ENCODE measurements at regions of chr5 and their contacts with region 1.

Region 1: DNA sequence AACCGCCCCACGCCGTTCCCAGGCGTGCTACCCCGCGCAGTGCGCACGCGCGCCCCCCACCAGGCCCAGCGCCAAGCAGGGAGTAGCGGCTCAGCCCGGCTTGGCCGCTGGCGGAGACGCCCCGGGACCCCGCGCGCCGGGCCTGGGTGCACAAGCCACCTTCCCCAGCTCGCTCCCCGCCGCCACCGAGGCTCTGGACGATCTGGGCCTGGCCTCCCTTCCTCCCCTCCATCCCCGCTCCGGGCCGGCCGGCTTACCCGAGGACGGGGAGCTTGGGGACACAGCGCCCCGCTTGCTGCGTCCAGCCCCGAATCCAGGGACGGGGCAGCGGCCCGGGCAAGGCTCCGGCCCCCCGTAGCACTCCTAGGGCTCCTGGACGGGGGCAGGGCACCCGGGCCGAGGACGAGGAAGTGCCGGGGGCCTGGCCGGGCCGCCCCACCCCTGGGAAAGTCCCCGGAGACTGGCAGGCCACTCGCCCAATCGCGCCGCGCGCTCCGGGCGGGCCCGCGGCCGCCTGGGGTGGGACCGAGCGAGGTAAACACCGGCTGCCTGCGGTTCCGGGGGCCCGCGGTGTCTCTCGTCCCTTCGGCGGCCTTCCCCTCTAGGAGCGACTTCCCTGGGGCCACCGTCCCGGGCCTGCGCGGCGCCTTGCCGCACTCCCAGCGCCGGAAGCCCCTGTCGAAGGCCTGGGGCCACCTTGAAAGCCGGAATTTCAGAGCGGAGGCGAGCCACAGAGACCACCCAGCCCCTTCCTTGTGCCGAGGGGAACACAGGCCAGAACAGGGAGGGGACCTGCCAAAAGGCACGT is at the start of gene TNIP1:
- DNase-seq: peak; percentile 96 to 98 (median 97)
- ATAC-seq: peak; percentile 87 to 98 (median 95)
- H3K4me3 ChIP-seq: peak within 1 kb of the TSS; percentile 63 to 100 (median 85)
- H3K27ac ChIP-seq: peak within 1 kb of the TSS; percentile 92 to 100 (median 96)
- H3K4me1 ChIP-seq: peaks cover 18 to 84% (median 62%) of the 10 kb centered on the region in 12 donors
- H3K27me3 ChIP-seq: no peaks in the 10 kb centered on the region
- CTCF ChIP-seq: peak in 1 of 12 donors; percentile 22
- POLR2A ChIP-seq: peak in 1 of 2 donors; percentile 78
- total RNA-seq, gene TNIP1: 86.0 to 180 (median 122) TPM

Region 2: GRCh38 chr5:151020304-151021110 is 60.3 kb before region 1 on chr5 and contains the start of gene GPX3:
- intact Hi-C with region 1: no loop called
- DNase-seq: peak; percentile 95 to 97 (median 97)
- ATAC-seq: peak; percentile 81 to 92 (median 85)
- H3K4me3 ChIP-seq: peak within 1 kb of the TSS; percentile 71 to 97 (median 86)
- H3K27ac ChIP-seq: peak within 1 kb of the TSS; percentile 88 to 98 (median 93)
- H3K4me1 ChIP-seq: peaks cover 14 to 82% (median 53%) of the 10 kb centered on the region in 12 donors
- H3K27me3 ChIP-seq: no peaks in the 10 kb centered on the region
- CTCF ChIP-seq: no peak
- POLR2A ChIP-seq: peak; percentile 97 to 100
- total RNA-seq, gene GPX3: 416 to 1,563 (median 738) TPM

Region 3: DNA sequence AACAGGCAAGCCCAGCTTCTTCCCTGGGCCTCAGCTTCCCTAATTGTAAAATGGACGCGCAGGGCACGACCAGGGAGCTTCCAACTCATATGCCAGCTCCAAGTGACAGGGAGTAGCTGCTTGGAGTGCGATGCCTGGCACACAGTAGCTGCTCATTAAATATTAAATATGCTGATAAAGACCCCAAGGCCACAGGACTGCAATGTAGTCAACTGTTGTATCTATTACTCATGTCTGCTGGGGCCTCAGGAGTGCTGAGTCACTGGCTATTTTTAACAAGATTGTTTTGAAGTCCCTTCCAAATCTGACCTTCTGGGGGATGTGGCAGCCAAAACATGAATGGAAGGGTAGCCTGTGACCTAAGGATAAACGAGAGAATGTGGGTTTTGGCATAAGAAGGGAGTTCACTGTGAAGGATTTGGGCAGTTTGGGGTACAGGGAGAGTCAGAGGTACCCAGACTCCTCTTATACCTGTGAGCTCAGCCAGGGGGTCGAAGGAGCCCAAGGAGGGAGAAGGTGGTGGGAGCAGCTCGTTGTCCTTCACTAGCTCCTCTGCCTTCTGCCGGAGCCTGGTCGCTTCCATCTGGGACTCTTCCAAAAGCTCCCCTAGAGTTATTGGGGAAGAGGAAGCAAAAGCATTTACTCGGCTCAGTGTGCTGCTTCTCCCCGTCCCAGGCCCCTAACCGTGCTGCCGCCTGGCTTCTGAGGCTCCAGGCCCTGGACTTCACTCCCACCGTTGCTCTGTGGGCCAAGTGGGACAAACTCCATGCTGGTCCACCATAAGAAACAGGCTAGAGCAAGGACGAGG is 17.5 kb before region 1 on chr5:
- intact Hi-C with region 1: loop called in 1 of 10 experiments (anchors 2 kb)
- DNase-seq: peak in 4 of 5 donors; percentile 55 to 73 (median 57)
- ATAC-seq: peak; percentile 75 to 79 (median 76)
- H3K4me3 ChIP-seq: peak overlapping the region in 1 of 12 donors; percentile 12
- H3K27ac ChIP-seq: peak overlapping the region; percentile 60 to 97 (median 86)
- H3K4me1 ChIP-seq: peaks cover 15 to 99% (median 82%) of the 10 kb centered on the region in 12 donors
- H3K27me3 ChIP-seq: no peaks in the 10 kb centered on the region
- CTCF ChIP-seq: peak in 1 of 12 donors; percentile 12
- POLR2A ChIP-seq: no peak

Region 4: DNA sequence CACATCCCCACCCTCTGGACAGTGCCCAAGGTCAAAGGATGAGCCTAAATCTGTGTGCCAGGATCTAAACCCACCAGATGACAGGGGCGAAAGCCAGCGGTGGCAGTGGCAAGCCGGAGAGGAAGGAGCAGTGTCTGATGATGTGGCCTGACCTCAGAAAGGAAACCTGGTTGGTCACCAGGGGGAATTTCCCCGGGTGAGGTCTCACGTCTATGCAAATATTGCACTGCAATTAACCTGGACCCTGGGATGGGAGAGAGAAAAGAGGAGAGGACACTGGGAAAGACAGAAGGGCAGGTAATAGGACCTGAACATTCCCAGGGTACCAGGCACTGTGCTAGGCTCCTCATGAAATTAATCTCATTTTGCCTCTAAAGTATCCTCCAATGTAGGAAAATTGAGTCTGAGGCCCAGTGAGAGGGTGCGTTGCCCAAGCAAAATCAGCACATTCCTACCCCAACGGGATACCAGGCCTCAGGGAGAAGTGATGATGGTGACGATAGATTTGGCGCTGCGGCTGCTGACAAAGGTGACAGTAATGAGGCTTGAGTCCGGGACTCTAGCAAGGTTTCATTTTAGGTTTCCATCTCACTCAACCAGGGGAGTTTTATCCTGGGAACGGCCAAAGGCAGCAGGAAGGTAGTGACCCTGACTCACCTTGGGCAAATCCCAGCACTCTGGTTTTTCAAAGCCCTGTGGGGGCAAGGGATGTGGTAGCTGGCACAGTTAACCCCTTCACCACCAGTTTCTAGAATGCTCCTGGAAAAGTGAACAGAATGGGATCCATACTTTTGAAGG is 13.4 kb after region 1 on chr5:
- intact Hi-C with region 1: loop called in 1 of 10 experiments (anchors 2 kb)
- DNase-seq: no peak
- ATAC-seq: peak in 1 of 4 donors; percentile 5
- H3K4me3 ChIP-seq: no peak overlapping the region
- H3K27ac ChIP-seq: peak overlapping the region in 11 of 12 donors; percentile 30 to 85 (median 55)
- H3K4me1 ChIP-seq: peaks cover 14 to 80% (median 34%) of the 10 kb centered on the region in 12 donors
- H3K27me3 ChIP-seq: no peaks in the 10 kb centered on the region
- CTCF ChIP-seq: no peak
- POLR2A ChIP-seq: no peak

Measured in heart left ventricle (tissue), 16 donors.